Spleen (tissue), 13 donors: ENCODE measurements at regions of chr22 and their contacts with region 1.

Region 1: GRCh38 chr22:23240639-23241389 is 60.5 kb downstream of the BCR start:
- DNase-seq: no peak
- H3K4me3 ChIP-seq: no peak overlapping the region
- H3K27ac ChIP-seq: peak overlapping the region in 4 of 8 donors; percentile 35 to 47 (median 45)
- H3K4me1 ChIP-seq: peaks cover 6 to 97% (median 62%) of the 10 kb centered on the region in 6 donors
- H3K27me3 ChIP-seq: no peaks in the 10 kb centered on the region
- CTCF ChIP-seq: peak in 7 of 11 experiments; percentile 22 to 49 (median 28)
- POLR2A ChIP-seq: no peak

Region 2: DNA sequence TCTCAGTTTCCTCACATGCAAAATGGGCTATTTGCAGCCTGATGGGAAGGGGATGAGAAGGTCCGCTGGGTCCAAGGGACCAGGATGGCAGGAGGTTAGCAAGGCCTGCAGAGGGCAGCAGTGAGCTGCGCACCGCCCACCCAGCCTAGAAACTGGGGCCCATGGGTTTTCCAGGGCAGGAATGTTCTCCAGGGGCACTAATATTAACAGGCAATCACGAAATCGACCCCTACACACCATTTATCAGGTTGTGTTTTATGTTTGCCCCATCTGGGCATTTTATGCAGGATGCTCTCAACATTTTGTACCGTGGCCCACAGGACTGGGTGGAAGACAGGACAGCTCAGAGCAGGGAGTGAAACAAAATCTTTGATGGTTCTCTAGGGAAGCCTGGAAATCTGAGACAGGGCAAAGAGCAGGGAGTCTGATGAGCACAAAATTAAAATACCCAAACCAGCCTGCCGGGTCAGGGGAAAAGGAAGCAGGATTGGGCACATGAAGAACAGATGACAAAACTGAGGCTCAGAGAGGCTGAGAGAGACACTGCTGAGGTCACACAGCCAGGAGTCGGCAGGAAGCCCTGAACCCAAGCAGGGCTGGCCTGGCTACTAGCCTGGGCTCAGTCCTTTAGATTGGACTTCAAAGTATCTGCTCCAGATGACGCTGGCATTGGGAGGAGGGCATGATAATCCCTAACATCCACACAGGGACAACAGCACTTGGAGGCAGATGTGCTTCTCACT is 62.1 kb before region 1 on chr22:
- intact Hi-C with region 1: loop called (anchors 10 kb)
- DNase-seq: peak; percentile 91
- H3K4me3 ChIP-seq: no peak overlapping the region
- H3K27ac ChIP-seq: peak overlapping the region in 4 of 8 donors; percentile 1 to 89 (median 83)
- H3K4me1 ChIP-seq: peaks cover 35 to 73% (median 52%) of the 10 kb centered on the region in 6 donors
- H3K27me3 ChIP-seq: no peaks in the 10 kb centered on the region
- CTCF ChIP-seq: peak; percentile 90 to 98 (median 95)
- POLR2A ChIP-seq: no peak

Region 3: DNA sequence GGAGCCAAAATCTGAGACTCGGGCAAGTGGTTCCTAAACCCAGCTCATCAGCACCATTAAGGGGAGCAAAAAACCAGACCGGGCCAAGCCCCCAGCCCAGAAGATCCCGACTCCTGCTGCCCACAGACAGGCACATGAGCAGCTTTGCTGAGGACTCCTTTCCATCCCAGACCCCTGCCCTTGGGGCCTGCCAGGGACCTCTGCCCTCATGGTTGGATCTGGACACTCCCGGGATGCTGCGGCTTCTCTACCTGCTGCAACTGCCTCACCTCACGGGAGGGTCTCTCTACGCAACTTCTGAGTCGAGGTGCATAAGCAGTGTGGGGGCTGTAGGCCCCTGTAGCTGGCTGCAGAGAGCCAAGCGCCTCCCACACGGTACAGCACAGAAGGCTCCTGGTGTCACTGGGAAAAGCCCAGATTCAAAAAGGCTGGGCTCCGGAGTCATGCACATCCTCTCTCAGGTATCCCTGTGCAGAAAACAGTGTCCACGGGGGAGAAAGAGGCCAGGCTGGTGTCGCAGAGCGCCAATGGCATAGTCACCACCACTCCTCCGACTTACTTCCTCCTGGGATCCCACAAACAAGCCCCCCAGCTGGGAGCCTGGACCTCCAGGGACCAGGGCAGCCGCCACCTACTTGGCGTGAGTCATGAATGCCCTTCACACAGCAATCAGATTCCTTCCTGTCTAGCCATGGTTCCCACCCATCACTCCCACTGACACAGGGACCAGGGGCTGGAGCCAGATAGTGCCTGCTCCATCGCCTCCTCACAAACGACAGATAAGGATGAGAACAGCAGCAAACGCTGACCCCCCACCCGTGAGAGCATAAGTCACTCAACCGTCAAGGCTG is 61.6 kb after region 1 on chr22:
- intact Hi-C with region 1: no loop called
- DNase-seq: peak; percentile 68
- H3K4me3 ChIP-seq: no peak overlapping the region
- H3K27ac ChIP-seq: no peak overlapping the region
- H3K4me1 ChIP-seq: peaks cover 7 to 46% (median 21%) of the 10 kb centered on the region in 6 donors
- H3K27me3 ChIP-seq: no peaks in the 10 kb centered on the region
- CTCF ChIP-seq: no peak
- POLR2A ChIP-seq: no peak